ENCODE measurements at regions of chr3 and their contacts with region 1.

Region 1: GRCh38 chr3:128794770-128795649 is 69.0 kb downstream of the RAB7A start:
- DNase-seq: peak in 5 of 10 donors; percentile 38 to 52 (median 51)
- H3K4me3 ChIP-seq: peak overlapping the region in 1 of 59 donors; percentile 22
- H3K27ac ChIP-seq: peak overlapping the region in 56 of 59 donors; percentile 4 to 82 (median 49)
- H3K27me3 ChIP-seq: no peaks in the 10 kb centered on the region
- CTCF ChIP-seq: peak; percentile 57 to 91 (median 81)

Region 2: DNA sequence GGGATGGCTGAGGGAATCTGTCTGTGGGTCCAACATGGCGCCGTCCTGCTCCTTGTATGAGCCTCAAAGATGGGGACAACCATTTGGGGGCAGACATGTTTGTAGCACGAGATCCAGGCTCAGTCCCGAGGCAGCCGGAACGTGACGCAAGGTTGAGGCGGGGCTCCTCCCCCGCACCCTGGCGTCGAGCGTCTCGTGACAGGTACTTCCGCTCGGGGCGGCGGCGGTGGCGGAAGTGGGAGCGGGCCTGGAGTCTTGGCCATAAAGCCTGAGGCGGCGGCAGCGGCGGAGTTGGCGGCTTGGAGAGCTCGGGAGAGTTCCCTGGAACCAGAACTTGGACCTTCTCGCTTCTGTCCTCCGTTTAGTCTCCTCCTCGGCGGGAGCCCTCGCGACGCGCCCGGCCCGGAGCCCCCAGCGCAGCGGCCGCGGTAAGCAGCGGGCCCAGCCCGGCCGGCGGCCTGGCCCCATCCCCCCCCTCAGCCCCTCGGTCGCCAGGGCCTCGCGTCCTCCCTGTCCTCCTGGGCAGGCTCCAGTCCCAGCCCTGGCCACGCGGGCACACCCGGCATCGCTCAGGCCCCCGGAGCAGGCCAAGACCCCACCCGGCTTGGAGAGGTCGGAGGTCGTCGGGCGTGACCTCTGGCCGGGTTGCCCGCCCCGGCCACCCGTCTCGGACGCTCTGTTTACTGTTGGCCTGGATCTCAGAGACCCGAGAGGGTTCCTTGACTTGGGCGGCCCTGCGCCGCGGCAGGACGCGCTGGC is 68.9 kb before region 1 on chr3 and contains the start of gene RAB7A:
- intact Hi-C with region 1: loop called (anchors 5 to 10 kb)
- DNase-seq: peak; percentile 94 to 99 (median 98)
- H3K4me3 ChIP-seq: peak within 1 kb of the TSS; percentile 71 to 100 (median 97)
- H3K27ac ChIP-seq: peak within 1 kb of the TSS; percentile 59 to 97 (median 91)
- H3K27me3 ChIP-seq: no peaks in the 10 kb centered on the region
- CTCF ChIP-seq: peak in 50 of 56 donors; percentile 7 to 69 (median 44)
- total RNA-seq, gene RAB7A: 221 to 378 (median 299) TPM